Naive thymus-derived CD4-positive, alpha-beta T cell (primary cell): ENCODE measurements at regions of chr7 and their contacts with region 1.

Region 1: DNA sequence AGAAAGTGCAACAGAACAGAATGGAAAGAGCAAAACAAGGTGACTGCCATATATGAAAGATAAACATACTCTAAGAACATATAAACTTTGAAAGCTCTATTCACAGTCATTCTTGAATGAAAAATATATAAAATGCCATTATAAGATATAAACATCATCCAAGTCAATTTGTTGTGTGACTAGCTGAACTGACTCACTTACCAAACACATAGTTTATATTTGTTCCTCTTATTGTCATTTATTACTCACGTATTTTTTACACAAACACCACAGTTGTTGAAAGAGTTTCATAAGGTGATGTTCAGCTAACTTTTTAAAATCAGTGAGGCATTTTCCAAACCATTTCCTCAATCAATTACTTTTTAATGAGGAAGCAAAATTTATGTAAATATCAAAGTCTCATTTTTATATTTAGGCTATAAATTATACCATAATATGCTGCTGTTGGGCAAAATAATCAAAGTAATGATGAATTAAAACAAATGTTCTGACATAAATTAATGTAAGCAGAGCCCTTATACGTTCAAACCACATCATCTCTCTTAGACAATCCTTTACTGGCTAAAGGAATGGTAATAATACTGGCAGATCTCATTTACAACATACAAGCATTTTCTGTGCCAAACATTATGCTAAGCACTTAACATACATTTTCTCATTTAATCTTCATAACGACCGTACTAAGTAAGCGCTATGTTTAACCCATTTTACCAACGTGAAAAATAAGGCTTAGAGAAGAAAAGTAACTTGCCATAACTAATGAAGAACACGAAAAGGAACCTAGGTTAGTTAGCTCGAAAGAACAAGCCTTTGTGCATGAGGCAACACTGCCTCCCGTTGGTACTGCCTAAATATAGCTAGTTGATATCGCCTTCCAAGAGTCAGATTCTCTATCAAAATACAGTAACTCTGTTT is 7.3 kb downstream of the LRRN3 start:
- DNase-seq: peak in 8 of 9 donors; percentile 42 to 77 (median 67)
- ATAC-seq: peak; percentile 93
- H3K4me3 ChIP-seq: no peak overlapping the region
- H3K4me3 Mint-ChIP-seq: peak overlapping the region; percentile 41 to 96 (median 82)
- H3K27ac ChIP-seq: peak overlapping the region; percentile 25
- H3K27ac Mint-ChIP-seq: peak overlapping the region; percentile 54 to 95 (median 84)
- H3K4me1 ChIP-seq: peaks cover 0 to 15% of the 10 kb centered on the region in 2 donors
- H3K4me1 Mint-ChIP-seq: peaks cover 15 to 81% (median 72%) of the 10 kb centered on the region in 7 donors
- H3K27me3 ChIP-seq: no peaks in the 10 kb centered on the region
- H3K27me3 Mint-ChIP-seq: no peaks in the 10 kb centered on the region

Region 2: GRCh38 chr7:110090110-110090769 is 1008.0 kb before region 1 on chr7:
- CTCF ChIA-PET with region 1: interaction called, 6 read pairs
- POLR2A ChIA-PET with region 1: no interaction called
- intact Hi-C with region 1: loop called in 1 of 2 experiments (anchors 1 kb)
- DNase-seq: peak in 6 of 9 donors; percentile 11 to 28 (median 15)
- ATAC-seq: no peak
- H3K4me3 ChIP-seq: no peak overlapping the region
- H3K4me3 Mint-ChIP-seq: no peak overlapping the region
- H3K27ac ChIP-seq: no peak overlapping the region
- H3K27ac Mint-ChIP-seq: no peak overlapping the region
- H3K4me1 ChIP-seq: no peaks in the 10 kb centered on the region
- H3K4me1 Mint-ChIP-seq: no peaks in the 10 kb centered on the region
- H3K27me3 ChIP-seq: no peaks in the 10 kb centered on the region
- H3K27me3 Mint-ChIP-seq: peaks cover 0 to 10% (median 3%) of the 10 kb centered on the region in 5 donors

Region 3: DNA sequence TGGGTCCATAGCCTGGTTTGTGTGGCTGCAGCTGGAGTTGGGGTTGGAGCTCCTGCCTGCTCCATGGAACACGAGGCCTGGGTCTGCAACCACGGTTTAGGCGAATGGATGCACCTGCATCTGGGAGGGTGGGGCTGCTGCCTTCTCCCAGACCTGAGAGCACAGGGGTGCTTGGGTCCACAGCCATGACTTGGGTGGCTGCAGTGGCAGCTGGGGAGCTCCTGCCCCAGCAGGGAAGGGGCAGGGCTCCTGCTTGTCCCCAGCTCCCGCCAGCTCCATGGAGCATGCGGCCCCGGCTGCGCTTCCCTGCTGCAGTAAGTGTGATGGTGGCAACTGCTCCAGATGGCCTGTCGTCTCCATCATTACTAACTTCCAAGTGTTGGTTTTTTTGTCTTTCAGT is 578.4 kb before region 1 on chr7:
- CTCF ChIA-PET with region 1: no interaction called
- POLR2A ChIA-PET with region 1: no interaction called
- intact Hi-C with region 1: loop called in 1 of 2 experiments (anchors 10 kb)
- DNase-seq: no peak
- ATAC-seq: no peak
- H3K4me3 ChIP-seq: no peak overlapping the region
- H3K4me3 Mint-ChIP-seq: no peak overlapping the region
- H3K27ac ChIP-seq: no peak overlapping the region
- H3K27ac Mint-ChIP-seq: no peak overlapping the region
- H3K4me1 ChIP-seq: no peaks in the 10 kb centered on the region
- H3K4me1 Mint-ChIP-seq: no peaks in the 10 kb centered on the region
- H3K27me3 ChIP-seq: no peaks in the 10 kb centered on the region
- H3K27me3 Mint-ChIP-seq: peaks cover 0 to 6% (median 4%) of the 10 kb centered on the region in 5 donors

Region 4: GRCh38 chr7:110604885-110605284 is 493.4 kb before region 1 on chr7:
- CTCF ChIA-PET with region 1: interaction called, 19 read pairs
- POLR2A ChIA-PET with region 1: no interaction called
- intact Hi-C with region 1: no loop called
- DNase-seq: no peak
- ATAC-seq: no peak
- H3K4me3 ChIP-seq: no peak overlapping the region
- H3K4me3 Mint-ChIP-seq: no peak overlapping the region
- H3K27ac ChIP-seq: no peak overlapping the region
- H3K27ac Mint-ChIP-seq: no peak overlapping the region
- H3K4me1 ChIP-seq: no peaks in the 10 kb centered on the region
- H3K4me1 Mint-ChIP-seq: peaks cover 3 to 10% (median 8%) of the 10 kb centered on the region in 7 donors
- H3K27me3 ChIP-seq: no peaks in the 10 kb centered on the region
- H3K27me3 Mint-ChIP-seq: peaks cover 0 to 8% (median 0%) of the 10 kb centered on the region in 5 donors

Region 5: DNA sequence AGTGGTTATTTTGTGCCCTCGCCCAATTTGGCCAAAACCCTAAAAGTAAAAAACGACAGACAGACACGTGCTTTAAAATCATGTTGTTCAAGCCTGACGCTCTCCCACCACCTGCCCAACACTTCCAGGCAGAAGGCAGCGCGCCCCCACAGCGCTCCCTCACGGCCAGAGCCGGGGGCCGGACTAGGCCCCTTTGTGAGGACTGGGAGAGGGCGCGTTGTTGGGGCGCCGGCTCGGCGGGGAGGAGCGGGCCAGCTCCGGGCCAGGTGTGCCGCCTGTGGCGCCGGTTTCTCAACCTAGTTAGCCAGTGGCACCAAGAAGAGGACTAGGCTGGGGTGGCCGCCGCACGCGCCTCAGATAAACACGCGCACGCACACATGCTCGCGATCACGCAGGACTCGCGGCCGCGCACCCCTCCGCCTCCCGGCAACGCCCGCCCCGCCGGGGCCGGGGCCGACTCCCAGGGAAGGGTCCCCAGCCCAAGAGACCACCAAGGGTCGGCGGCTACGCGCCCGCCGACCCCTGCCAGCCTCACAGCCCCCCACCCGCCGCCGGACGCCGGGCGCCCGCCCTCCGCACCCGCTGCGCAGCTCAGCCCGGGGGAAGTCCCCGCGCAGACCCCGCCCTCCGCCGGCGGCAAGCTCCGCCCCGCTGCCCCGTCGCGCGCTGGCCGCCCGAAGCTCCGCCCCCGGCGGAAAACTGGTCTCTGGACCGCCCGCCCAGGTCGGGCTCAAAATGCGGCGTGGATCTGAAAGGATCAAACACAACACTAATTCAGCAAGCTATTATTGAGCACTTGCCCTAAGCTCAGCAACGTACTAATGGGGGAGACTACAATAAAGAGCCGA is 463.8 kb after region 1 on chr7 and contains the start of gene IMMP2L:
- CTCF ChIA-PET with region 1: interaction called, 3 read pairs
- POLR2A ChIA-PET with region 1: no interaction called
- intact Hi-C with region 1: loop called (anchors 1 to 5 kb)
- DNase-seq: peak; percentile 80 to 97 (median 90)
- ATAC-seq: peak; percentile 98
- H3K4me3 ChIP-seq: peak within 1 kb of the TSS; percentile 57
- H3K4me3 Mint-ChIP-seq: peak within 1 kb of the TSS; percentile 86 to 94 (median 92)
- H3K27ac ChIP-seq: peak within 1 kb of the TSS; percentile 94
- H3K27ac Mint-ChIP-seq: peak within 1 kb of the TSS; percentile 81 to 98 (median 95)
- H3K4me1 ChIP-seq: peaks cover 13 to 15% of the 10 kb centered on the region in 2 donors
- H3K4me1 Mint-ChIP-seq: peaks cover 25 to 58% (median 46%) of the 10 kb centered on the region in 7 donors
- H3K27me3 ChIP-seq: no peaks in the 10 kb centered on the region
- H3K27me3 Mint-ChIP-seq: peaks cover 2 to 12% (median 5%) of the 10 kb centered on the region in 5 donors
- total RNA-seq, gene IMMP2L: 9.7 to 20.8 (median 16.5) TPM